WTC11 (cell line): ENCODE measurements at regions of chr1 and their contacts with region 1.

Region 1: GRCh38 chr1:39189592-39190041 is 14.9 kb upstream of the MACF1 start:
- DNase-seq: no peak
- ATAC-seq: no peak
- H3K4me3 Mint-ChIP-seq: no peak overlapping the region
- H3K27ac Mint-ChIP-seq: peak overlapping the region; percentile 24
- H3K4me1 Mint-ChIP-seq: peaks cover 71% of the 10 kb centered on the region
- H3K27me3 Mint-ChIP-seq: no peaks in the 10 kb centered on the region
- CTCF ChIP-seq: no peak

Region 2: GRCh38 chr1:38941527-38942019 is 248.0 kb before region 1 on chr1 and contains the start of gene RHBDL2:
- CTCF ChIA-PET with region 1: no interaction called
- POLR2A ChIA-PET with region 1: no interaction called
- DNase-seq: no peak
- ATAC-seq: peak; percentile 74
- H3K4me3 Mint-ChIP-seq: peak within 1 kb of the TSS; percentile 32; the same call in 1 of the 2 replicates
- H3K27ac Mint-ChIP-seq: peak within 1 kb of the TSS; percentile 50; the same call in 1 of the 2 replicates
- H3K4me1 Mint-ChIP-seq: peaks cover 16% of the 10 kb centered on the region
- H3K27me3 Mint-ChIP-seq: no peaks in the 10 kb centered on the region; the same call in 1 of the 2 replicates
- CTCF ChIP-seq: no peak
- total RNA-seq, gene RHBDL2: 0.26 to 0.30 TPM (median 0.27 TPM) in 3 replicates

Region 3: DNA sequence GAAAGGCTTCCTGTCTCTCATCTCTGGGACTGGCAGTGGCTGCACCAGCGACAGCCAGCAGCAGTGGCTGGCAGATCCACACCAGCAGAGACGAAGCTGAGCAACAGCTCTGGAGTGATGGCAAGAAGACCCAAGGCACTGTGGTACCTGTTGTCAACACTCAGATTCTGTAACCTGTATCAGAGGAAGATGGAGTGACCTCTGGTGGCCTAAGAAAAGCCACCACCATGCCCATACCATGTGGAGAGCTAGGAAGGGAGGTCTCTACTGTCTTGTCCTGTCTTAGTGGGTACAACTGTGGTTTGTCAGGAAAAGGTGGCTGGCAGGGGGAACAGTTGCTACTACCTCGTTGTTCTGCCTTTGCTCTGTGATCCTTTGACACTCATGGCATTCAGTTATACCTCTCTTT is 225.5 kb before region 1 on chr1:
- CTCF ChIA-PET with region 1: no interaction called
- POLR2A ChIA-PET with region 1: no interaction called
- DNase-seq: peak; percentile 13
- ATAC-seq: peak; percentile 90
- H3K4me3 Mint-ChIP-seq: no peak overlapping the region
- H3K27ac Mint-ChIP-seq: no peak overlapping the region
- H3K4me1 Mint-ChIP-seq: peaks cover 2% of the 10 kb centered on the region; the same call in 1 of the 2 replicates
- H3K27me3 Mint-ChIP-seq: no peaks in the 10 kb centered on the region
- CTCF ChIP-seq: no peak

Region 4: DNA sequence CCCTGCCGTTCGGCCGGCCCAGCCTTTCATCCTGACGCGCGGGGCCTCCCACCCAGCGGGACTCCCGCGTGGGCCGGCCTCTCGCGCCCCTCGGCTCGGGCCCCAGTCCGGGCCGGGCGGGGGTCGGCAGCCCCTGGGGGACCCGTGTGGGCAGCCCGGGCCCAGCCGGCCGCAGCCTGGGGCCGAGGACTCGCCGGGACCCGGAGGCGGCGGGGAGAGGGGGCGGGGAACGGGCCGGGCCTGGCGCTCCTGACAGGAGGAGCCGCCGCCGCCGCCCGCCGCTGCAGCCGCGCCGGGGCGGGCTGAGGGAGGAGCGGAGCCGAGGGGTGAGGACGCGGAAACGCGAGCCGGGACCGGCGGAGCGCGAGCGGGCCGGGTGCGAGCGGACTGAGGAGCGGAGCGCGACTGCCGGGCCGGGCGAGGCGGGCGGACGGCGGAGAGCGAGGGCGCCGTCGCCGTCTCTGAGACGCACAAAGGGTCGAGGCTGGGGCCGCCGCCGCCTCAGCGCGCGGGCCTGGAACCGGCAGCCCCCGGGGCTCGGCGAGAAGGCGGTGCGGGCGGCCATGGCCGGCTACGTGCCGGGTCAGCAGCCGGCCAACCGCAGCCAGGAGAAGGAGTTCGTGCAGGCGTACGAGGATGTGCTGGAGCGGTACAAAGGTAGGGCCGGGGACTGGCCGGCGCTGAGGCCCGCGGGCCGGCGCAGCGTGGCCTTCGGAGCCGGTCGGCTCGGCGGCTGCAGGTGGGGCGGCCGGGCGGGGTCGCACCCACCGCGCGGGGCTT is 84.4 kb before region 1 on chr1:
- CTCF ChIA-PET with region 1: interaction called, 90 read pairs
- POLR2A ChIA-PET with region 1: interaction called, 6 read pairs
- DNase-seq: peak; percentile 70
- ATAC-seq: peak; percentile 19
- H3K4me3 Mint-ChIP-seq: peak overlapping the region; percentile 71
- H3K27ac Mint-ChIP-seq: no peak overlapping the region
- H3K4me1 Mint-ChIP-seq: peaks cover 40% of the 10 kb centered on the region
- H3K27me3 Mint-ChIP-seq: no peaks in the 10 kb centered on the region
- CTCF ChIP-seq: no peak

Region 5: DNA sequence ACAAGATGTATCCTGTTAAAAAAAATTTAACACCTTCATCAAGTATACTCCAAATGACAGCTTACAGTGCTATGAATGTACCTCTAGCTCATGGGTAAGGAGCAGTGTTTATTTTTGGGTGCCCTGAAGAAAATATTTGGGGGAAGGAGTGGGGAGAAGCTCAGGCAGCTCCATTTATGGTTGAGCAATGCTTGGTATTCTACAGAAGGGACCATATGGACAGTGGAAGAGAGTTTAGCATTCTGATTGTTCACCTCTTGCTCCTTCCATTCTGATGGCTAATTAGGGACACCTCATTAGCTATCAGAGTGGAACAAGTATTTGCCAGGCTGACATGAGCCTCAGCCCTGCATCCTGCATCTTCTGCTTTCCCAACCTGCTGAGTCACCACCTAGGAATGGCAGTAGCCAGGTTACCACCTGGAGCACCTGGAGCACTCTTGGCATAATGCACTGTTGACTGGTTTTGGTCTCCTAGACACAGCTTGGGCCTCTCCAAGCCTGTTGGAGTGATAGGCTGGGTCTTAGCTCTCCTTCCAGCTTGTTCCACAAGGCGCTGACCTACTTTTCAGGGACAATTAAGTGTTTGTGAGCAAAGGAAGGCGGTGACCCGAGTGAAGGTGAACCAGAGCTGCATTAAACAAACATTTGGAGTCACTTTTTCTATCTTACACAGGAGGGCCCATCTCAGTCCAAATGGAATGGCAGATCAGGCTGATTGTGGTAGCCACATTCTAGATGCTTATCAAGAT is 47.0 kb before region 1 on chr1:
- CTCF ChIA-PET with region 1: interaction called, 63 read pairs
- POLR2A ChIA-PET with region 1: interaction called, 3 read pairs
- DNase-seq: peak; percentile 41
- ATAC-seq: peak; percentile 63
- H3K4me3 Mint-ChIP-seq: no peak overlapping the region
- H3K27ac Mint-ChIP-seq: peak overlapping the region; percentile 97
- H3K4me1 Mint-ChIP-seq: peaks cover 62% of the 10 kb centered on the region
- H3K27me3 Mint-ChIP-seq: no peaks in the 10 kb centered on the region
- CTCF ChIP-seq: no peak

Region 6: DNA sequence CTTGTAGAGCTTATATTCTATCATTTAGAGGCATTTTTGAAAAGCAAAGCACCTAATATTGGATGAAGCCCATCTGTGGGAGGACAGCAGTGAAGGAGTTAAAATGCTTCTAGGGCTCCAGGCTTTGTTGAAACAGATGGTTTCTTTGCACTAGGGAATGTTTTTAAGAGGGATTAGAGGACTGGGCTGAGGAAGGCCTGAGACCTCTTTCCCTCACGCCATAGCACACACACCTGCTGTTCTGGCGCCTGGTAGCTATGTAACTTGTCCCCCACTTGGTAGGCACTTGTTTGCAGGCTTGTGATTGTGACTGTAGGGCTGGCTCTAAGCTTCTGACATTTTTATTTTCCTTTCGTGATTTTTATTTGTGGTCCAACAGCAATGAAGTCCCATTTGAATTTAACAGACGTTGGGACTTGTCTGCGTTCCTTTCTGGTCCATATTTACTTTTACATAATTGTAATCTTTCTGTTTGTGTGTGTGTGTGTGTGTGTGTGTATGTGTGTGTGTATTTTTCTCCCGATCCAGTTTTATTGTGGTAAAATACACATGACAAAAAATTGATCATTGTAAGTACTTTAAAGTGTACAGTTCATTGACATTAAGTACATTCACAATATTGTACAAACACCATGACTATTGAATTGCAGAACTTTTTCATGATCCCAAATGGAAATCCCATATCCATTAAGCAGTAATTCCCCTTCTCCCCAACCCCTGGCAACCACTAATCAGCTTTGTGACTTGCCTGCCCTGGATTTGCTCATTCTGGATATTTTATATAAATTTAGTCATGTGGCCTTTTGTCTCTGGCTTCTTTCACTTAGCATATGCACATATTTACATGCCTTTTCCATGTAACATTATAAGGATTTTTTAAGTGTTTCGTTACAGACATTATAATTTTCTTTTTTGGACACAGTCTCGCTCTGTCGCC is 18.6 kb before region 1 on chr1:
- CTCF ChIA-PET with region 1: interaction called, 72 read pairs
- POLR2A ChIA-PET with region 1: interaction called, 3 read pairs
- DNase-seq: peak; percentile 41
- ATAC-seq: peak; percentile 88
- H3K4me3 Mint-ChIP-seq: peak overlapping the region; percentile 39
- H3K27ac Mint-ChIP-seq: peak overlapping the region; percentile 97
- H3K4me1 Mint-ChIP-seq: peaks cover 78% of the 10 kb centered on the region
- H3K27me3 Mint-ChIP-seq: no peaks in the 10 kb centered on the region
- CTCF ChIP-seq: no peak

Region 7: GRCh38 chr1:39275836-39276507 is 86.4 kb after region 1 on chr1:
- CTCF ChIA-PET with region 1: interaction called, 19 read pairs
- POLR2A ChIA-PET with region 1: no interaction called
- DNase-seq: no peak
- ATAC-seq: no peak
- H3K4me3 Mint-ChIP-seq: no peak overlapping the region
- H3K27ac Mint-ChIP-seq: 0 out of 2 replicates have a peak overlapping the region, but pooled peaks have one; percentile 0
- H3K4me1 Mint-ChIP-seq: peaks cover 60% of the 10 kb centered on the region
- H3K27me3 Mint-ChIP-seq: no peaks in the 10 kb centered on the region
- CTCF ChIP-seq: no peak

Region 8: DNA sequence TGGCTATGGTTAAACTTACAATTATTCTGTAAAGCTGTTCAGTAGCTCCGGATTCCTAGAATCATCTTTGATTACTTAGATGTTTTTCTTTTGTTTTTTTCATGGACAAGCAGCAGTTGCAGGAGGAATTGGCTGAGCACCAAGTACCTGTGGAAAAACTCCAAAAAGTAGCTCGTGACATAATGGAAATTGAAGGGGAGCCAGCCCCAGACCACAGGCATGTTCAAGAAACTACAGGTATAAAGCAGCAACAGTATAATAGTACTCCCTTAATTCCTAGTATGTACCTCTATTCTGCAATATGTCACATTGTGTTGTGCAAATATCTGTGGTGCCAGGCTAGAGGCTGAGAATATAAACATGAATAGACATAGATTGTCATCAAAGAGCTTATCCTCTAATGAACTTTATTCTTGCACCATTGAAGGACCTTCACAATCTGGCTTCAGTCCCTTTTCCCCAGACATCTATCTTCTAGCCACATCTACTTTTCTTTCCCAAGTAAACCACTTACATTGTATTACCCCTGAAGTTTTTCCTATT is 169.5 kb after region 1 on chr1:
- CTCF ChIA-PET with region 1: no interaction called
- POLR2A ChIA-PET with region 1: no interaction called
- DNase-seq: no peak
- ATAC-seq: no peak
- H3K4me3 Mint-ChIP-seq: no peak overlapping the region
- H3K27ac Mint-ChIP-seq: peak overlapping the region; percentile 17; the same call in 1 of the 2 replicates
- H3K4me1 Mint-ChIP-seq: no peaks in the 10 kb centered on the region
- H3K27me3 Mint-ChIP-seq: no peaks in the 10 kb centered on the region
- CTCF ChIP-seq: no peak